A549 (cell line): ENCODE measurements at regions of chr7 and their contacts with region 1.

Region 1: GRCh38 chr7:95690367-95690947 is 81.9 kb upstream of the DYNC1I1 start:
- DNase-seq: peak; percentile 6 to 73
- ATAC-seq: peak; percentile 74 to 79
- H3K4me3 ChIP-seq: peak overlapping the region; percentile 12; the same call in 1 of the 3 replicates
- H3K27ac ChIP-seq: peak overlapping the region; percentile 27 to 53; a peak in 3 of 6 replicates
- H3K4me1 ChIP-seq: peaks cover 23% of the 10 kb centered on the region; the same call in 2 of the 3 replicates
- CTCF ChIP-seq: peak; percentile 99
- EP300 ChIP-seq: no peak
- POLR2A ChIP-seq: no peak
- RAD21 ChIP-seq: peak; percentile 62 to 87

Region 2: GRCh38 chr7:94295850-94296249 is 1394.6 kb before region 1 on chr7:
- CTCF ChIA-PET with region 1: interaction called, 32 read pairs
- POLR2A ChIA-PET with region 1: no interaction called
- DNase-seq: peak; percentile 18 to 64
- ATAC-seq: peak; percentile 76 to 87; a peak in 5 of 6 replicates
- H3K4me3 ChIP-seq: no peak overlapping the region
- H3K27ac ChIP-seq: peak overlapping the region in 1 of 2 experiments; percentile 55; a peak in 3 of 6 replicates
- H3K4me1 ChIP-seq: peaks cover 38% of the 10 kb centered on the region
- CTCF ChIP-seq: peak; percentile 66
- EP300 ChIP-seq: no peak
- POLR2A ChIP-seq: no peak
- RAD21 ChIP-seq: peak; percentile 82 to 83

Region 3: GRCh38 chr7:95485391-95486123 is 204.9 kb before region 1 on chr7 and contains the start of gene ASB4:
- CTCF ChIA-PET with region 1: interaction called, 124 read pairs
- POLR2A ChIA-PET with region 1: no interaction called
- DNase-seq: no peak
- ATAC-seq: 0 out of 6 replicates have a peak, but pooled peaks of 1 of the 2 experiments have one; percentile 20
- H3K4me3 ChIP-seq: peak within 1 kb of the TSS; percentile 16; the same call in 1 of the 3 replicates
- H3K27ac ChIP-seq: peak within 1 kb of the TSS; percentile 7 to 32; a peak in 3 of 6 replicates
- H3K4me1 ChIP-seq: peaks cover 24% of the 10 kb centered on the region; the same call in 2 of the 3 replicates
- CTCF ChIP-seq: no peak
- EP300 ChIP-seq: no peak
- POLR2A ChIP-seq: no peak
- RAD21 ChIP-seq: no peak
- polyA plus RNA-seq, gene ASB4: 3.1 TPM in 2 replicates

Region 4: DNA sequence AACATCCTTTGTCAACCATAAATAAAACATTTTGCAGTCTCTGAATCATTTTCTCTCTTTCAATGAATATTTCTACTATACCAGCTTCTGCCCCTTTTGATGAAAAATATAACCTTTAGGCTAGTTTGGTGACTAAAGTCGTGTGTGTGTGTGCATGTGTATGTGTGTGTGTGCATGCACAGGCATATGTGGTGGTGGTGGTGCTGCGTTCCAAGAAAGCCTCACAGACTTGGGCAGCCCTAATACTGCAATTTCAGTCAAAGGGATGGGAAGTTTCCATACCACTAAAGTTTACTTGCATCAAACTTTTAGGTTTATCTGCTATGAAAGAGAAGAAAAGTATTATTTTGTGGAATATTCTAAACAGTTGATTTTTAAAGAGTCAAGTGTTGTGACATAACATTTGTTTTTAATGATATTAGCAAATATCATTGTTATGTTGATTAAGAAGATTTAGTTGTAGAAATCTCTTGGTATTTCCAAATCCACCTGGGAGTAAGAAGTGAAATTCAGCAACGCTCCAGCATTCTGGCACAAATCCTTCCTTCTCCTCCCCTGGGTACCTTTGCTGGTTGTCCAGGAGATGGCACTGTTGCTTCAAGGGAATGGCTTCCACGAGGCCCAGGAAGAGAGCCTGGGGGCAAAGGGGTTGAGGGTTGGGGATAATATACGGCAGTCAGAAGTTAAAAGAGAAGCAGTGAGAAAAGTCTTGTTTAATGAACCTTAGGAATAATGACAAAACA is 163.3 kb before region 1 on chr7:
- CTCF ChIA-PET with region 1: interaction called, 403 read pairs
- POLR2A ChIA-PET with region 1: no interaction called
- DNase-seq: peak; percentile 73 to 75
- ATAC-seq: peak; percentile 90 to 95
- H3K4me3 ChIP-seq: no peak overlapping the region
- H3K27ac ChIP-seq: peak overlapping the region; percentile 49 to 72
- H3K4me1 ChIP-seq: peaks cover 21% of the 10 kb centered on the region
- CTCF ChIP-seq: peak; percentile 94
- EP300 ChIP-seq: no peak
- POLR2A ChIP-seq: no peak
- RAD21 ChIP-seq: peak; percentile 97 to 98

Region 5: DNA sequence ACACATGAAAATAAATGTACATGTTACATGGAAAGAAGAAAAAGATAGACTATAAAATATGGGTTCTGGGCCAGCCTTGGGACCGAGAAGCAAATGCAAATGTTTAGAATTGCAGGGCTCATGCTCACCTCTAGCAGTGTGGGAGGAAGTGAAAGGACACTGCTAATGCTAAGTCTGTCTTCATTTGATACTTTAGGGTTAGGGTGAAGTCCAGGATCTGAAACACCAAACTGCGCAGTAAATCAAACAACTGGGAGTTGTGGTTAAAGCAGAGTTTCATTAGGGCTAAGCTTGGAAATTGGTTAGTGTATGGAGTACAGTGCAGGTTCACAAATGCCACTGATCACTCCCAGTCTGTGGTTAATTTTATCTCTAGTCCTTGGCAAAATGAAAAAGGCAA is 20.9 kb before region 1 on chr7:
- CTCF ChIA-PET with region 1: interaction called, 84 read pairs
- POLR2A ChIA-PET with region 1: no interaction called
- DNase-seq: no peak
- ATAC-seq: no peak
- H3K4me3 ChIP-seq: no peak overlapping the region
- H3K27ac ChIP-seq: no peak overlapping the region
- H3K4me1 ChIP-seq: no peaks in the 10 kb centered on the region
- CTCF ChIP-seq: no peak
- EP300 ChIP-seq: no peak
- POLR2A ChIP-seq: no peak
- RAD21 ChIP-seq: no peak